ENCODE measurements at regions of chr2 and their contacts with region 1.

Region 1: DNA sequence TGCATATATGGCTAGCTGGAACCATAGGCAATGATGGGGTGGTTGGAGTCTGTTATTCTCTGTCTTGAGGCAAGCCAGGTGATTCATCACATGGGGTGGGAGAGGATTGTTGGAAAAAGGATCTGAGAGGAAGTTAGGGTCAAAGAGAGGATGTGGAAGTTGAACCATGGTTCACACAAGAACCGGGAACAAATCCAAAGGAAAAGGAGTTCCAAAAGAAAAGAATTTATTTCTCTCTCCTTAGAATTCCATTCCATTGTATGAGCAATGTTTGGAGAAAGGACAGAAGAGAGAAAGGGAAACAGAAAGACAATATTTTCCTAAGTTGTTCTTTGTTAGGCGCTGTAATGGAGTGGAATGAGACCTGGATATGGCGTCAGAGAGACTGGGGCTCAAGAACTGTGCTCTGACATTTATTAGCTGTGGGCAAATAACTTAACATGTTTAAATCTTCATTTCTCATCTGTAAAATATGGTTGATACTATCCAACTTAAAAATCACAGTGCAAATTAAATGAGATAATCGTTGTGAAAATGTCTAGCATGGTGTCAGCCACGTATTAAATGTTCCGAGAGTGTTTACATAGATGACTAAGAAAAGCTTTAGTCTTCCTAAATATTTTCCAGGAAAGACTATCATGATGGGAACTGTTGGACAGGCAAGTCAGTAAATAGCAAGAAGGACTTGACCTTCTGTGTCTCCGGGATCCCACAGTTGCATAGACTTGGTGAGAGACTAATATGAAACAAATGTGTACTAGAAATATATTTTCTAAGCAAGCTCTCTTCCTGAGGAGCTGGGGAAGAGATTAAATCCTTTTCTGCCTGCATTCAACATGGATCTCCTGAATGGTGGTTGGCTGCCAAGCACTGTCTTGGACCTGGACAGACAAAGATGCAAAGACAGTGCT is 71.4 kb downstream of the TRIB2 start:
- DNase-seq: peak; percentile 96
- H3K4me3 ChIP-seq: peak overlapping the region in 1 of 3 experiments; percentile 51
- H3K27ac ChIP-seq: peak overlapping the region; percentile 99
- H3K4me1 ChIP-seq: peaks cover 20% of the 10 kb centered on the region
- H3K27me3 ChIP-seq: no peaks in the 10 kb centered on the region
- CTCF ChIP-seq: no peak
- POLR2A ChIP-seq: no peak

Region 2: GRCh38 chr2:12665334-12665733 is 122.8 kb before region 1 on chr2:
- CTCF ChIA-PET with region 1: no interaction called
- POLR2A ChIA-PET with region 1: no interaction called
- dilution Hi-C with region 1: no loop called
- intact Hi-C with region 1: loop called (anchors 2 kb)
- DNase-seq: peak; percentile 94
- H3K4me3 ChIP-seq: no peak overlapping the region
- H3K27ac ChIP-seq: peak overlapping the region; percentile 86
- H3K4me1 ChIP-seq: peaks cover 24% of the 10 kb centered on the region
- H3K27me3 ChIP-seq: no peaks in the 10 kb centered on the region
- CTCF ChIP-seq: no peak
- POLR2A ChIP-seq: no peak

Region 3: DNA sequence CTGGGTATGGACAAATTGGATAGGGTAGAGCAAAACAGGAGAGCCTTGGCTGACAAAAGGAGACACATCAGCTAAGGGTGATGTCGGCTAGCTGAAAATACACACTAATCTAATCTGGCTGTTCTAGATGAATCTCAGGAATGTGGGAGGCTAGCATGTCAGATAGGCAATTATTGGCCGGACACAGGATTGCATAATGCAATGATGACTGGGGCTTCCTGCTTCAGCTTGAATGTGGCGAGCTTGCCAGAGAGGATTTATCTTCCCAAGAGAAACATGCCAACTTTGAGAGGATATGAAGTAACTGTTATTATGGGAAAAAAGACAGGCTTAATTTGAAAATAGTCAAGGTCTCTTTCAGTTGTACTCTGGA is 30.9 kb after region 1 on chr2:
- CTCF ChIA-PET with region 1: no interaction called
- POLR2A ChIA-PET with region 1: no interaction called
- dilution Hi-C with region 1: no loop called
- intact Hi-C with region 1: loop called (anchors 1 kb)
- DNase-seq: peak; percentile 97
- H3K4me3 ChIP-seq: peak overlapping the region in 1 of 3 experiments; percentile 41
- H3K27ac ChIP-seq: peak overlapping the region; percentile 96
- H3K4me1 ChIP-seq: peaks cover 32% of the 10 kb centered on the region
- H3K27me3 ChIP-seq: no peaks in the 10 kb centered on the region
- CTCF ChIP-seq: no peak
- POLR2A ChIP-seq: peak; percentile 52

Region 4: GRCh38 chr2:12856934-12857601 is 68.9 kb after region 1 on chr2:
- CTCF ChIA-PET with region 1: no interaction called
- POLR2A ChIA-PET with region 1: no interaction called
- dilution Hi-C with region 1: no loop called
- intact Hi-C with region 1: loop called (anchors 1 kb)
- DNase-seq: peak; percentile 81
- H3K4me3 ChIP-seq: peak overlapping the region in 1 of 3 experiments; percentile 23
- H3K27ac ChIP-seq: peak overlapping the region; percentile 91
- H3K4me1 ChIP-seq: peaks cover 27% of the 10 kb centered on the region
- H3K27me3 ChIP-seq: no peaks in the 10 kb centered on the region
- CTCF ChIP-seq: no peak
- POLR2A ChIP-seq: peak; percentile 38

Region 5: GRCh38 chr2:12918835-12919445 is 130.8 kb after region 1 on chr2:
- CTCF ChIA-PET with region 1: no interaction called
- POLR2A ChIA-PET with region 1: no interaction called
- dilution Hi-C with region 1: no loop called
- intact Hi-C with region 1: no loop called
- DNase-seq: no peak
- H3K4me3 ChIP-seq: no peak overlapping the region
- H3K27ac ChIP-seq: no peak overlapping the region
- H3K4me1 ChIP-seq: no peaks in the 10 kb centered on the region
- H3K27me3 ChIP-seq: no peaks in the 10 kb centered on the region
- CTCF ChIP-seq: no peak
- POLR2A ChIP-seq: no peak

Region 6: DNA sequence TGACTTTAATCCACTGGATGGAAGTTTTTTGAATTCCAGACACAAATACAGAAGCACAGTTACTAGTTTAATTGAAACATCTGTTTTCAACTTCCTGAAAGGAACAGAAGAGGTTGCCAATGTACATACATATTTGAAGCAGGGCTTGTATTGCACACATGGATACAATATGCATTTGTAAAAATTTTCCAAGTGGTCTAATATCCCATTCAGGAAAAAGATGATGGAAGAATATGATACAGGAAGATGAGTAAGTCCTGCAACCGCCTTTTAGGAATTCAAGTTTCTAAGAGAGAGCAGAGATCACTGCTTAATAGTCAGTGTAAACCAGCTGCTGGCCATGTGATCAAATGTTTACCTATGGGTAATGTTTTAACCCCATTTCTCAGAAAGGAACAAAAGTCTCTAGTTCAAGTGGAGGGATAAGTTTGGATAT is 194.0 kb after region 1 on chr2:
- CTCF ChIA-PET with region 1: no interaction called
- POLR2A ChIA-PET with region 1: no interaction called
- dilution Hi-C with region 1: no loop called
- intact Hi-C with region 1: loop called (anchors 1 kb)
- DNase-seq: peak; percentile 90
- H3K4me3 ChIP-seq: no peak overlapping the region
- H3K27ac ChIP-seq: peak overlapping the region; percentile 50
- H3K4me1 ChIP-seq: peaks cover 28% of the 10 kb centered on the region
- H3K27me3 ChIP-seq: no peaks in the 10 kb centered on the region
- CTCF ChIP-seq: no peak
- POLR2A ChIP-seq: no peak

Region 7: DNA sequence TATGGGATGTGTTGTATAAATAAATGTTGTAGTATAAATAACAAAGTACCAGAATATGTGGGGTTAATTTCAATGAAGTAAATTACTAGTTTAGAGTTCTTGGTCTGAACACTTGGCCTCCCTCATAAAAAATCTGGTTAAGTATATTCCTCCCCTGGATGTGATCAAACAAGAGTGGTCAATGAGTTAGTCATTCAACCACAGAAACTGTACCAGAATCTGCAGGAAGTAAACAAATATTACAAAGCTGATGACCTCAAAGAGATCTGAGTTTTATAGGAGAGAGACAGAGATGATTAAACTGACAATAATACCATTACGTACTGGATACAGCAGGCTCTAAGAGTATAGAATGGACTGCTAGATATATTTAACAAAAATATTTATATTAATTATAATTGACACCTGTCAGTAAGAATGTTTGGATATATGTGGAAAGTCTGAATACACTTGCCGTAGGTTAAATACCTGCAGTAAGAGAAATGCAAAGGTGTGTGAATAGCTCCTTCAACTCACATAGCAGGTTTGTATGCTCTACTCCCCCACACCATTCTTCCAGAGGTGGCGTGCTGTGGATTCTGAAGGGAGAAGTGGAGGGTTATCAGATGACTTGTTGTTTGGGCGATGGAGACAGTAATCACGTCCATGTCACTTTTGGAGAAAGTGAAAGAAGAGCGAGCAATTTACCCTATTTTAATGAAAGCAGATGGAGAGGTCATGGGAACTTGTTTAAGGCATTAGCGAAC is 1736.1 kb after region 1 on chr2:
- CTCF ChIA-PET with region 1: no interaction called
- POLR2A ChIA-PET with region 1: no interaction called
- dilution Hi-C with region 1: no loop called
- intact Hi-C with region 1: no loop called
- DNase-seq: no peak
- H3K4me3 ChIP-seq: no peak overlapping the region
- H3K27ac ChIP-seq: no peak overlapping the region
- H3K4me1 ChIP-seq: no peaks in the 10 kb centered on the region
- H3K27me3 ChIP-seq: no peaks in the 10 kb centered on the region
- CTCF ChIP-seq: no peak
- POLR2A ChIP-seq: no peak

Measured in endothelial cell of umbilical vein (primary cell).